Mammary epithelial cell (primary cell): ENCODE measurements at regions of chr17 and their contacts with region 1.

Region 1: DNA sequence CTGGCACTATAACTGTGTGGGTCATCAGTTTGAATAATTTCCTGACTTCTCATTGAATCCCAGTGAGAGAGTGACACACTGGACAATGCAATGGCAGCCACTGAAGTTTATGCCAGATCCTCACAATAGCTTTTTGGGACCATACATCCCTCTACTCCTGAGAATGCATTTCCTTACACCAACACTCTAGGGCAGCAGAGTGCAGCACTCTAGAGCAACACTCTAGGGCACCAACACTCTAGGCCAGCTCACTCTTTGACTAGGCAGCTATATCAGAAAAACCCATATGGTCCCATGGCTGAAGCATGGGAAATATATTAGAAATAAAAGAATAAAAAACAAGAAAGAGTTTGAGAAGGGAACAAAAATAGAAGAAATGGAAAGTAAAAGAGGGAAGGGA is 309.2 kb downstream of the MAP2K6 start:
- DNase-seq: peak; percentile 19
- H3K4me3 ChIP-seq: no peak overlapping the region
- H3K27ac ChIP-seq: no peak overlapping the region
- H3K4me1 ChIP-seq: no peaks in the 10 kb centered on the region
- H3K27me3 ChIP-seq: no peaks in the 10 kb centered on the region
- CTCF ChIP-seq: peak; percentile 35 to 64

Region 2: GRCh38 chr17:69030145-69030544 is 693.6 kb before region 1 on chr17:
- CTCF ChIA-PET with region 1: no interaction called
- dilution Hi-C with region 1: no loop called
- in situ Hi-C with region 1: no loop called
- intact Hi-C with region 1: no loop called
- DNase-seq: peak; percentile 20
- H3K4me3 ChIP-seq: no peak overlapping the region
- H3K27ac ChIP-seq: no peak overlapping the region
- H3K4me1 ChIP-seq: no peaks in the 10 kb centered on the region
- H3K27me3 ChIP-seq: no peaks in the 10 kb centered on the region
- CTCF ChIP-seq: no peak

Region 3: GRCh38 chr17:69978056-69978646 is 254.4 kb after region 1 on chr17:
- CTCF ChIA-PET with region 1: no interaction called
- dilution Hi-C with region 1: no loop called
- in situ Hi-C with region 1: no loop called
- intact Hi-C with region 1: loop called (anchors 10 kb)
- DNase-seq: peak; percentile 45
- H3K4me3 ChIP-seq: no peak overlapping the region
- H3K27ac ChIP-seq: no peak overlapping the region
- H3K4me1 ChIP-seq: no peaks in the 10 kb centered on the region
- H3K27me3 ChIP-seq: no peaks in the 10 kb centered on the region
- CTCF ChIP-seq: no peak

Region 4: DNA sequence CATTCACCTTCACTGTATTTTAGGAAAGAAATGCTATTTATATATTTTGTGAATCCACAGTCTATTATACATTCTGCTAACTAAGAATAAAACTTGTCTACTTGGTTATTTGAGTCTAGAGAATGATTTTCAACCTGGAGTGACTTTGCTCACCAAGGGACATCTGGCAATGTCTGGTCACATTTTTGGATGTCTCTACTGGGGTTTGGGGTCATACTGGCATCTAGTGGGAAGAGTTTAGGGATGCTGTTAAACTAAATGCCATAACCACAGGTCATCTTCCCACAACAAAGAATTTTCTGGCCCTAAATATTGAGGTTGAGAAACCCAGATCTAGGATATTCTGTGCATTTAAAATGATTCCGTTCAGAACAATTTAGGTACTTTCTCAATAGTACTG is 377.2 kb after region 1 on chr17:
- CTCF ChIA-PET with region 1: no interaction called
- dilution Hi-C with region 1: no loop called
- in situ Hi-C with region 1: no loop called
- intact Hi-C with region 1: loop called (anchors 5 kb)
- DNase-seq: no peak
- H3K4me3 ChIP-seq: no peak overlapping the region
- H3K27ac ChIP-seq: no peak overlapping the region
- H3K4me1 ChIP-seq: no peaks in the 10 kb centered on the region
- H3K27me3 ChIP-seq: no peaks in the 10 kb centered on the region
- CTCF ChIP-seq: peak; percentile 7 to 28

Region 5: DNA sequence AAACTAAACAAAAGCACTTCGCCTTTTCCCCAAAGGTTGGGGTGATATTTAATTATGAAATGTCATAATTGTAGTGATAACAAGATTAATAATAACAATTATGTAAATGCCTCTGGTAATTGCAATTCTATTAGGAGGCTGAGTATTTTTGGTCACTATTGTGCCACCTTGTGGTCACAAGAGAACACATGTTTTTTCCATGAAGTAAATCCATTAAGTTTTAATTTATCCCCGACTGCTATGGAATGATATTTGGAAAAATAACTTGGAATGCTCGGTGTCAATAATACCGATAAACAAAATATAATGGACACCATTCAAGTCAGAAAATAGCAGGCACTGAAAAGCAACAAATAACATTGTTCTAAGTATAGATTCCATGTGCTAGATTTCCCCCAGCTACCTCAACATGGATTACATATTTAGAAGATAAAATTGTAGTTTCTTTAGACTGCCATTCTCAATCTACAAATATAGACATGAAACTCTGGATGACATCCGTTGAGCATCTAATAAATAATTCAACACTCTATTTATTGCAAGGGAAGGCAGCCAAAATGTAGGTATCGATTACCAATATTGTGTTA is 420.6 kb after region 1 on chr17:
- CTCF ChIA-PET with region 1: no interaction called
- dilution Hi-C with region 1: no loop called
- in situ Hi-C with region 1: loop called in 1 of 2 experiments (anchors 25 kb)
- intact Hi-C with region 1: loop called (anchors 1 kb)
- DNase-seq: peak; percentile 16
- H3K4me3 ChIP-seq: no peak overlapping the region
- H3K27ac ChIP-seq: no peak overlapping the region
- H3K4me1 ChIP-seq: no peaks in the 10 kb centered on the region
- H3K27me3 ChIP-seq: no peaks in the 10 kb centered on the region
- CTCF ChIP-seq: peak; percentile 55 to 66